ENCODE measurements at regions of chr1 and their contacts with region 1.

Region 1: GRCh38 chr1:56434740-56435139 is 144.6 kb downstream of the PLPP3 start:
- DNase-seq: no peak

Region 2: DNA sequence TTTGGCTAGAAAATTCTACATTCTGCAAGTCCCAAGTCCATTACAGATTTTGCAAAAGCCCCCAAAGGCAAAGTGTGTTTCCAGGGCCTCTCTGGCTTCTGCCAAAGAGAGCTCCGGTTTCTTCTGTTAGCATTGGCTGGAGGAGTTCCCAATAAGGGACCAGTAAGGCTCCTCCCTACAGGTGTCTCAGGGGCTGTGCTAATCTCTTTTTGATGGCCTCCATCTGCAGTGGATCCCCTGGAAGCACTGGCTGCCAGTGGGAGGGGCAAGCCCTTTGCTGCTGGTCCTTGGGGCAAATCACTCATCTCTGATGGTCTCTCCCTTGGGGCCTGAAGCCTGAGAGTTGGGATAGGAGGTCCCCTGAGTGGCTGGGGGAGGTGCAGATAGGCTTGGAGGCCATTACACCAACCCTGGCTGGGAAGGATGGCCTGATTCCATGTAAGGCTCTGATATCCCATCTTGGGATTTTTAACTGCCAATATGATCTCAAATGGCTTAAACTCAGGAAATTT is 1130.5 kb before region 1 on chr1:
- intact Hi-C with region 1: no loop called
- DNase-seq: no peak

Region 3: DNA sequence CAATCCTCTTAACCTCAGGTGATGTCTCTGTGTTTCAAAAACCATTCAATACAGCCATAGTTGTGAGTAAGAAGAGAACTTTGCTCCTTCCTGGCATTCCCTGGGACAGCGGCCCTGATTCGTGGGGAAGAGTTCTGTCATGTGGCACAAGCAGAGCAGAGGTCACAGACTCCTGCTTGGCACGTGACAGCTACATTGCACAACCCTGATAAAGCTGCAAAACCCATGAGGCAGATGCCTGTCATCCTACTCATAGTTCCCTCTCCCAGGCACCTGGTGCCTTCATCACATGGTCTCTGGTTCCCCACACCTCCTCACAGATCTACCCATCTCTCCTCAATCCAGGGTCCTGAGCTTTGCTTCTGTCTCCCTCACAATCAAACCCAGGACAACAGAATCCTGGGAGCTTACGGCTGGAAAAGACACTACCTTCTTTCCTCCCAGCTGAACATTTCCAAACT is 73.8 kb after region 1 on chr1:
- intact Hi-C with region 1: loop called (anchors 5 kb)
- DNase-seq: peak; percentile 86

Region 4: DNA sequence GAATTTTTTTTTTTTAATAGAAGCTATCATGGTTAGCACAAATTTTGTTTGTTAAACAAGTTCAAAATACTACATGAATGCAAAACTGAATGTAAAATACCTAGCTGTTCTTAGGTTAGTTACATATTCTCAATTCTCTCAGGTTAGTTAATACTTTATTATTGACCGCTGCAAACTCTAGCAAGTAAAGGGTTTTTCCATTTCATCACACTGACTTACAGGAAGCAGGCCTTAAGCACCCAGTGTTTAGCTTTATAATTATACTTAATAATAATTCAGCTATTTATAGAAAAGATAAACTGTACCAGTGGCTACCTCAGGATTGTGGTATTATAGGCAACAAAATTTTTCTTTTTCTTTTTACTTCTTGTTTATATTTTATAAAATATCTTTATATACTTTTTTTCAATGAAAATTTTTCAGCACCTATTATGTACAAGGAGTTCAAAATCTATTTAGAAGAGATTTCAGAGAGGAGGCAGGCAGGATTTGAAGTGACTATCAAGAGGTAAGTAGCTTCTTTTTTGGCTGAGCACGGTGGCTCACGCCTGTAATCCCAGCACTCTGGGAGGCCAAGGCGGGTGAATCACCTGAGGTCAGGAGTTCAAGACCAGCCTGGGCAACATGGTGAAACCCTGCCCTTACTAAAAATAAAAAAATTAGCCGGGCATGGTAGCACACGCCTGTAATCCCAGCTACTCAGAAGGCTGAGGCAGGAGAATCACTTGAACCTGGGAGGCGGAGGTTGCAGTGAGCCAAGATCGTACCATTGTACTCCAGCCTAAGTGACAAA is 126.7 kb after region 1 on chr1:
- intact Hi-C with region 1: loop called (anchors 5 kb)
- DNase-seq: no peak

Measured in cardiac septum (tissue), 1 donor.